Activated CD8-positive, alpha-beta T cell treated with anti-CD3 and anti-CD28 coated beads for 36 hours (primary cell): ENCODE measurements at regions of chrX and their contacts with region 1.

Region 1: DNA sequence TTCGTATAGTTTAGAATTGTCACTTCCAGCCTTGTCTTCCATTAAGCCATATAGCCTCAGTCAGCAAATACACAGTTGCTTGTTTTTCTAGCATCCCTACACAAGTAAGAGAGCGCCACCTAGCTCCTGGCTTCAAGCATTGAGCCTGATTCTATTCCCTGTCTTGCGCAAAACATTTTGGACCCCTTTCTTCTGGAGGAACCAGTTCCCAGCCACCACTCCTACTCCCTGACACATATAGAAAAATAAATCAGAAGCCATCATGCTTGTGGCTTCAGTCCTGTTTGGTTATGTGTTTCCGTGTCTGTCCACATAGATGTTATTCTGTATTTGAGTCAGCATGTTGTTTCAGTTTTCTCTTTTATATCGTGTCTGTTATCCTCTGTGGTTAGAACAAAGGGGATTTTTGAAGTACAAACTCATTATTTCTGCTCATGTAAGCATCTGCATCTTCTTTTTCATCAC is 59.9 kb downstream of the GK start:
- DNase-seq: peak; percentile 62
- ATAC-seq: peak; percentile 93
- H3K4me3 Mint-ChIP-seq: no peak overlapping the region
- H3K27ac Mint-ChIP-seq: peak overlapping the region; percentile 84
- H3K4me1 Mint-ChIP-seq: peaks cover 20% of the 10 kb centered on the region
- H3K27me3 Mint-ChIP-seq: no peaks in the 10 kb centered on the region
- CTCF ChIP-seq: no peak

Region 2: DNA sequence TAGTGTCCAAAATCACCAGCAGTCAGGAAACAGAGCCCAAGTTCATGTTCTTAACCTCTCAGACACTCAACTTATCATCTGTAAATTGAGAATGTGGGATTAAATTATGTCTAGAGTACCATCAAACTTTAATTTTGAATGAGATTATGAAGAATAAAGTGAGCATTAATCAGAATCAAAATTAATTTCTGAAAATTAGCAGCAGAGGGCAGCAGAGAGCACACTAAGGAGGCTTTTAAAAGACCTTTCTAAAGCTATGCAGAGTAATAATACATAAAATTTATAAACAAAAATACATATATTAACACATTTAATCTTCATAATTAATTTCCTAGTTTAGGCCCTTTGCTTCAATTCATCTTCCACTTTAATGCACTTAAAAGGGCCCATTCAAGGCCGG is 142.6 kb before region 1 on chrX:
- CTCF ChIA-PET with region 1: no interaction called
- POLR2A ChIA-PET with region 1: no interaction called
- intact Hi-C with region 1: loop called (anchors 5 kb)
- DNase-seq: no peak
- ATAC-seq: no peak
- H3K4me3 Mint-ChIP-seq: no peak overlapping the region
- H3K27ac Mint-ChIP-seq: no peak overlapping the region
- H3K4me1 Mint-ChIP-seq: peaks cover 16% of the 10 kb centered on the region
- H3K27me3 Mint-ChIP-seq: no peaks in the 10 kb centered on the region
- CTCF ChIP-seq: peak; percentile 69

Region 3: GRCh38 chrX:30635630-30636029 is 77.5 kb before region 1 on chrX:
- CTCF ChIA-PET with region 1: interaction called, 4 read pairs
- POLR2A ChIA-PET with region 1: no interaction called
- intact Hi-C with region 1: loop called (anchors 5 kb)
- DNase-seq: no peak
- ATAC-seq: no peak
- H3K4me3 Mint-ChIP-seq: no peak overlapping the region
- H3K27ac Mint-ChIP-seq: no peak overlapping the region
- H3K4me1 Mint-ChIP-seq: no peaks in the 10 kb centered on the region
- H3K27me3 Mint-ChIP-seq: no peaks in the 10 kb centered on the region
- CTCF ChIP-seq: peak; percentile 40

Region 4: GRCh38 chrX:30659421-30659820 is 53.7 kb before region 1 on chrX:
- CTCF ChIA-PET with region 1: no interaction called
- POLR2A ChIA-PET with region 1: interaction called, 4 read pairs
- intact Hi-C with region 1: loop called (anchors 5 kb)
- DNase-seq: no peak
- ATAC-seq: peak; percentile 80
- H3K4me3 Mint-ChIP-seq: no peak overlapping the region
- H3K27ac Mint-ChIP-seq: peak overlapping the region; percentile 89
- H3K4me1 Mint-ChIP-seq: peaks cover 39% of the 10 kb centered on the region
- H3K27me3 Mint-ChIP-seq: no peaks in the 10 kb centered on the region
- CTCF ChIP-seq: no peak

Region 5: GRCh38 chrX:30680618-30681017 is 32.5 kb before region 1 on chrX:
- CTCF ChIA-PET with region 1: no interaction called
- POLR2A ChIA-PET with region 1: no interaction called
- intact Hi-C with region 1: no loop called
- DNase-seq: no peak
- ATAC-seq: no peak
- H3K4me3 Mint-ChIP-seq: no peak overlapping the region
- H3K27ac Mint-ChIP-seq: no peak overlapping the region
- H3K4me1 Mint-ChIP-seq: no peaks in the 10 kb centered on the region
- H3K27me3 Mint-ChIP-seq: no peaks in the 10 kb centered on the region
- CTCF ChIP-seq: no peak